GM10248 (cell line): ENCODE measurements at regions of chr21 and their contacts with region 1.

Region 1: DNA sequence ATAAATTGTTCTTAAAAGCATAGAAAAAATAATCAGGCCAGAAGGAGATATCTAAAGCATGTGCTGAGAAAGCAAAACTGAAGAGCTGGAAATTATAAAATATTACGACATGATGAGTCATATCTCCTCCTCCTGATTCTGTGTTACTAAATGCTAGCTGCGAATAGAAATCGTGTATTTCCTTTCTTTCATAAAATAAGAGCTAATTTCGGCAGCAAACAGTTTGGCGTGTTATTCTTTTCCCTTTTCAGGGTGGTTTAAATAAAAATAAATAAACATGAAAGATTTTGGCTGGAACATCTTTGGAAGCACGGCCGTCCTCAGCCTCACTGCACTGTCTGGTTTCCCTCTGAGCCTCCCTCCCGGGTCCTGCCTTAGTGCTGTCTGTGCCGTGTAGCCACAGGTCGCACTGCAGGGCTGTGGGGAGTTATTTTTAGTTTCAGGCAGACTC is 56.0 kb downstream of the ADARB1 start:
- DNase-seq: no peak
- CTCF ChIP-seq: no peak

Region 2: DNA sequence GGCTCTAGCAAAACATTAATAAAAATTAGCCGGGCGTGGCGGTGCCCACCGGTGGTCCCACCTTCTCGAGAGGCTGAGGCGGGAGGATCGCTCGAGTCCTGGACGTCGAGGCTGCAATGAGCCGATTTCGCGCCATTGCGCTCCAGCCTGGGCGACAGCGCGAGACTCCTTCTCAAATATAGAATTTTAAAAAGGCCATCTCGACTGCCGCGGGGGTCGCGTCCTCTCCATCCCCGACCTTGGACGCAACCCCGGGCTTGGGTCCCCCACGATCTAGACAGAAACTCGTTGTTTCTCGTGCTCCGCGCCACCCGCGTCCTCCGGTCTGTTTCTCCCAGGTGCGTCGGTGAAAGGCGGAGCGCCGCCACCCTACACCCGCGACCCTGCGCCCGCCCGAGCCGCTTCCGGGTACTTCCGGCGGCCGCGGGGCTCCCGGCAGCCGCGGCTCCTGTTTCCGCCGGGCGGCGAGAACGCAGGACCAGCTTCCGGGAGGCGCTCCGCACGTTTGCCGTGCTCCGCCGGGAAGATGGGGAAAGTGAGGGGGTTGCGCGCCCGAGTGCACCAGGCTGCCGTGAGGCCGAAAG is 190.7 kb before region 1 on chr21 and contains the start of gene SLX9:
- CTCF ChIA-PET with region 1: interaction called, 313 read pairs
- POLR2A ChIA-PET with region 1: no interaction called
- DNase-seq: peak; percentile 93
- CTCF ChIP-seq: no peak

Region 3: DNA sequence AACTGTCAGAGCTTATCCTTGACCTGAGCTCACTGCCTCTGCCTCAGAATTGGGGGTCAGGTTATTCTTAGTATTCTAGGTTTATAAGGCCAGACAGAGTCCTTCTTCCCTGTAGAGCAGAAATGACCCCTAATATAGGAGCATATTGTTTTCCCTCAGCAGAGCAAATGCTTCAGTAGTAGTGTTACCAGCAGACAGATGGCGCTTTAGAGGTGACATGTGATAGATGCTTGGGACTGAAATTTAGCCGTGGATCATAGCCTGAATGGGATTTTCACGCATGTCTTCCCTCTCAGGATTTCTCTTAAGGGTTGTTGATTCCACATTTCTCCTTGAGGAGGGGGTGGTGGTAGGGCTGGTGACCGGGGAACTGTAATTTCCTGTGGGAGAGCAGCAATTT is 31.5 kb before region 1 on chr21:
- CTCF ChIA-PET with region 1: interaction called, 123 read pairs
- POLR2A ChIA-PET with region 1: no interaction called
- DNase-seq: peak; percentile 56
- CTCF ChIP-seq: peak; percentile 60

Region 4: DNA sequence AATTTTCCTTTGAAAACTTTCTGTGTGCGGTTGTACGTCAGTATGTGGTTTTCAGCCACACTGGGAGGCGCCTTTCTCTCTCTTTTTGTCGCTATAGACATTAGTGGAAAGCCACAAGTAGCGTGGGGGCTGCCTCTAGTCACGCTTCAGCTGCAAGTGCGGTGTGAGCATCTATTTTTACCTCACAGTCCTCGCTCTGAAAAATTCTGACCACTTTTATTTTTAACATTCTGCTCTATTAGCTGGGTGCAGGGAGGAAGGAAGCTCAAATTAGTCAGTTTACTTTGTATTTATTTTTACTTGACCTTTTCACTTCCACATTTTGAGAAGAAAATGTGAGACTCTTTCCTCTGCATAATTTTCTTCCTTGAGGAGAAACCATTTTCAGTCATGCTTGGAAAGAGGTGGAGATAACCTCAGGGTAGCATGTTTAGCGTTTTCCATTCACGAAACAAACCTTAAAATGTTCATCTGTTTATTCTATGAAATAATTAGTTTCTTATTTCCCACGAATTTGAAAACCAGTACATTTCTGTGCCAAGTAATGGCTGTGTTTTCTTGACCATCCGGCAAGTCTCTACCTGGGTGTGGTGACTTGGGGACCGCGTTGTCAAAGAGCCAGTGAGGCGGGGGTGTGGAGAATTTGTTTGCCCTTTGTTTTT is 20.4 kb before region 1 on chr21:
- CTCF ChIA-PET with region 1: interaction called, 131 read pairs
- POLR2A ChIA-PET with region 1: no interaction called
- DNase-seq: peak; percentile 82
- CTCF ChIP-seq: no peak

Region 5: DNA sequence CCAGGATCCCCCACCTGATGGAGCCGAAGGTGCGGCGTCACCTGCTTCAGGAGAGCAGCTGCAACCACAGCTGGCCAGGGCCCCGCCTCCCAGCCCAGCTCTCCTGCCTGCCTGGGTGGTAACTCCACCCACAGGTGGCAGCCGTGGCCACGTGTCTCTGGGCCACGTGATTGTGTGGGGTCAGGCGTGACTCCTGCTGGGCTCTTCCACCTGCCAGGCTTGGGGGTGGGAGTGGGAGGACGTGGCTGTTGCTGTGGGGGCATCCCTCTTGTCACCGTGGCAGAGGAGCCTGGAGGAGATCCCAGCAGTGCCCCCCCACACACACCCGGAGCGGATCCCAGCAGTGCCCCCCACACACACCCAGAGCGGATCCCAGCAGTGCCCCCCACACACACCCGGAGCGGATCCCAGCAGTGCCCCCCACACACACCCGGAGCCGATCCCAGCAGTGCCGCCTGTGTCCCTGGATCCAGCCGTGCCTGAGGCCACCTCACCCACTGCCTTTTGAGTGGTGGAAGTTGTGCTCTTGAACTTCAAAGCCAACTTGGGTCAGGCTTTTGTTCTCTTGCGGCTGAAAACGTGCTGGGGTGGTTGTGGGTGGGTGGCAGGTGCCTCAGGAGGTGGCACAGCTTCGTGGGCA is 125.2 kb after region 1 on chr21:
- CTCF ChIA-PET with region 1: no interaction called
- POLR2A ChIA-PET with region 1: no interaction called
- DNase-seq: no peak
- CTCF ChIP-seq: no peak